Adrenal gland (tissue), 19 donors: ENCODE measurements at regions of chr9 and their contacts with region 1.

Region 1: DNA sequence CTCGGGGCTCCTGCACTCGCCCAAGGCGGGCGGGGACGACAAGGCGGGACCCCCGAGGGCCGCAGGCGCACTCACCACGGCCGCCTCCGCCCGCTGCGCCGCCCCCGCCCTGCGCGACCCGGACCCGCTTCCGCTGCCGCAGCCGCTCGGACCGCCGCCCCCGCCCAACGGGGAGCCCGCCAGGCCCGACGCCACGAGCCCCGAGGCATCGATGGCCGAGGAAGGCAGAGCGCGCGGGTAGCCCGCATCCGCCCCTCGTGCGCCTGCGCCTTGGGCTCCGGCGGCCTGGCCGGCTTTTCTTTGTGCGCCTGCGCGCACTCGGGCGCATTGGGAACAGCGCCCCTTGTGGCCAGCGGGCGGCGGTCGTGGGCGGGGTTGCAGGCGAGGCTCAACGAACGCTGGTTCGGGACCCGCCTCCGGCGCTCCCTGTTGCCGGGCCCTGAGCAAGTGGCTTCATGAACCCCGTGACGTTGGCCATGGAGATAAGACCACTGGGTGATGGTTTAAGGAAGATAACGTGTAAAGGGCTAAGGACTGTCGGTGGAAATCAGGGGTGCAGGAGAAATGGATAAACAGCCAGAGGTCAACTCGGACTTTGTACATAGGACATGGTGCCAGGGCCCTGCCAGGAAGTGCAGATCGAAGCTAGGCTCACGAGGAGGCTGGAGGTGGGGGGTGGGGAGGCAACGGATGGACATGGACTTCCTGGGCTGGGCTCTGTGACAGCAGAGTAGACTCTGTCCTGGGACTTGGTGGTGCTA is at the starts of genes C8G and FBXW5:
- DNase-seq: peak; percentile 93 to 97 (median 95)
- H3K4me3 ChIP-seq: peak within 1 kb of the TSS; percentile 39 to 100 (median 74)
- H3K27ac ChIP-seq: peak within 1 kb of the TSS; percentile 46 to 99 (median 85)
- H3K4me1 ChIP-seq: peaks cover 26% of the 10 kb centered on the region in 2 donors
- H3K27me3 ChIP-seq: no peaks in the 10 kb centered on the region
- CTCF ChIP-seq: peak; percentile 85 to 100 (median 98)
- POLR2A ChIP-seq: peak; percentile 78 to 82
- total RNA-seq, gene C8G: 0.68 to 5.5 (median 1.2) TPM in 3 of 9 donors, not detected in the others
- total RNA-seq, gene FBXW5: 91.6 to 257 (median 202) TPM

Region 2: DNA sequence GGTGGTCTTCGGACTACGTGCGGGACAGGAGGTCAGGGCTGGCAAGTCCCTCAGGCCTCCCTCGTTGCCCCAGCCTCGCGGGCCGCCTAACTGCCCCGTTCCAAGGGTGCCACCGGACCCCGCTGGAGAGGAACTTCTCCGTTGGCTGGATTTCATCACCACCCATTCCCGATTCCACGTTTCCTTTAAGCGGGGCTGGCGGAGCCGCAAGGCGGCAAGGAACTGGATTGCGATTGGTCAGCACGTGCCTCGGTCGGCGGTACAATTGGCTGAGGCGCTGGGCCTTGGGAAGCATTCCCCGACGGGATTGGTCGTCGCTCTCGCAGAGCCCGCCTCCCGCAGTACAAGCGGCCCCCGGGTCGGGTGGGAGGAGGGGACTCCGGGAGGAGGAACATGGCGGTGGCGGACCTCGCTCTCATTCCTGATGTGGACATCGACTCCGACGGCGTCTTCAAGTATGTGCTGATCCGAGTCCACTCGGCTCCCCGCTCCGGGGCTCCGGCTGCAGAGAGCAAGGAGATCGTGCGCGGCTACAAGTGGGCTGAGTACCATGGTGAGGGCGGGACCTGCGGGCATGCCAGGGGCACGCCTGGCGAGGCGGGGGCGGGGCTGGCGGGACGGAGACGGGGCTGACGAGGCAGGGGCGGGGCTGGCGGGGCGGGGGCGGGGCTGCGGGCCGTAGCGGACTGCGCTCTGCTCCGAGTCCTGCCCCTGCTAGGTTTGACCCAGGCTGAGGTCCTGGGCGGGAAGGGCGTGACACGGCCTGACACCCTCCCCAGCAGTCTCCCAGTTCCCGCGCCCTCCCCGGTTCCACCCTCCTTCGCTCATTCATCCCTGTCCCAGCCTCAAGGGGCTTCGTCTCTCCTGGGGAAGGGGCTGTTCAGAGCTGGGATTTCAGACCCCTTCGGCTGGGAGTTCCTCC is 95.4 kb before region 1 on chr9 and contains the start of gene PHPT1:
- intact Hi-C with region 1: loop called (anchors 10 kb)
- DNase-seq: peak; percentile 98 to 99 (median 99)
- H3K4me3 ChIP-seq: peak within 1 kb of the TSS; percentile 36 to 83 (median 48)
- H3K27ac ChIP-seq: peak within 1 kb of the TSS; percentile 86 to 98 (median 91)
- H3K4me1 ChIP-seq: peaks cover 14 to 25% of the 10 kb centered on the region in 2 donors
- H3K27me3 ChIP-seq: no peaks in the 10 kb centered on the region
- CTCF ChIP-seq: no peak
- POLR2A ChIP-seq: peak; percentile 75 to 81
- total RNA-seq, gene PHPT1: 73.9 to 267 (median 171) TPM

Region 3: GRCh38 chr9:136858844-136859757 is 85.6 kb before region 1 on chr9:
- intact Hi-C with region 1: loop called in 1 of 2 experiments (anchors 10 kb)
- DNase-seq: peak; percentile 87 to 95 (median 90)
- H3K4me3 ChIP-seq: no peak overlapping the region
- H3K27ac ChIP-seq: peak overlapping the region in 4 of 5 donors; percentile 40 to 84 (median 66)
- H3K4me1 ChIP-seq: peaks cover 7 to 13% of the 10 kb centered on the region in 2 donors
- H3K27me3 ChIP-seq: no peaks in the 10 kb centered on the region
- CTCF ChIP-seq: no peak
- POLR2A ChIP-seq: no peak

Region 4: GRCh38 chr9:136885950-136886578 is 58.6 kb before region 1 on chr9 and contains the start of gene TRAF2:
- intact Hi-C with region 1: loop called in 1 of 2 experiments (anchors 10 kb)
- DNase-seq: peak; percentile 97 to 99 (median 98)
- H3K4me3 ChIP-seq: peak within 1 kb of the TSS in 3 of 4 donors; percentile 54 to 68 (median 68)
- H3K27ac ChIP-seq: peak within 1 kb of the TSS; percentile 7 to 93 (median 70)
- H3K4me1 ChIP-seq: peaks cover 16 to 20% of the 10 kb centered on the region in 2 donors
- H3K27me3 ChIP-seq: no peaks in the 10 kb centered on the region
- CTCF ChIP-seq: no peak
- POLR2A ChIP-seq: no peak
- total RNA-seq, gene TRAF2: 3.8 to 16.9 (median 10.3) TPM

Region 5: DNA sequence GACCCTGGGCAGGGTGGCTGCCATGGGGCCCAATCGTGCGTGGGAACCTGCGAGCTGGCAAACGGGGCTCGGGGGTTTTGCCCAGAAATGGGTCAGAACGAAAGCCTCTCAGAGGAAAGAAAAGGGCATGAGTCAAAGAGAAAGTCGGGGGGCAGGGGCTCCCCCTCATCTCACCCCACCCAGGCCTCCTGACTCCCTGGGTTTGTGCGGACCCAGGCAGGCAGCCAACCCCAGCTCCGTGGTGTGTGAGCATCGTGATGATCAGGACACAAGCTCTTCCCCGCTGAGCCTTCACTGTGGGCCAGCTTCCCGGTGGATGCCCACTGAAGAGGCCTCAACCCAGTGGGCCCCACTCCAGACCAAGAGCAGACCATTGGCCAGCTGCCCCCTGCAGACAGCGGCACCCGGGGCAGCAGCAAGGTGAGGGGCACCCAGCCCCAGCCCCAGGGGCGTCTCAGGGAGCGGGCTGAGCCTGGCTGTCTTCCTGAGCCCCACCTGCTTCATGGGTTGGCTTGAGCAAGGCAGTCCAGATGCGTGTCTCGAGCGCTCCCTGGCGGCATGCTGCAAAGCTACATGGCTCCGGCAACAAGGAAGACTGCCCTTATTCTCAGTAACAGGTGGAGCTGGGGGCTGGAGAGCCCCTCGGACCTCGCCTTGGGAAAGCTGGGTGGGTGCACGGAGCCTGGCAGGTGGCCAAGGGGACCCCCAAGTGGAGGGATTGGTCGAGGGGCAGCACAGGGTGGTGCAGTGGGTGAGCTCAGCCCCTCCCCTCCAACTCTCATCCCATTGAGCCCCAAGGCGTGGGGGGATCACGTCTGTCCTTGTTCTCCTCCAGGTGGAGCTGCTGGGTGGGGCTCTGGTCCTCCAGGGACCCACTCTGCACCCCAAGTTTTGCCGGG is 90.4 kb after region 1 on chr9:
- intact Hi-C with region 1: loop called in 1 of 2 experiments (anchors 5 kb)
- DNase-seq: peak; percentile 81 to 93 (median 83)
- H3K4me3 ChIP-seq: no peak overlapping the region
- H3K27ac ChIP-seq: peak overlapping the region in 2 of 5 donors; percentile 34 to 35
- H3K4me1 ChIP-seq: peaks cover 0 to 16% of the 10 kb centered on the region in 2 donors
- H3K27me3 ChIP-seq: no peaks in the 10 kb centered on the region
- CTCF ChIP-seq: peak; percentile 82 to 93 (median 92)
- POLR2A ChIP-seq: no peak